T-cell (primary cell): ENCODE measurements at regions of chr14 and their contacts with region 1.

Region 1: GRCh38 chr14:64569184-64569631 is 19.4 kb downstream of the PPP1R36 start:
- DNase-seq: no peak
- ATAC-seq: no peak
- H3K4me3 ChIP-seq: no peak overlapping the region
- H3K4me3 Mint-ChIP-seq: no peak overlapping the region
- H3K27ac ChIP-seq: no peak overlapping the region
- H3K27ac Mint-ChIP-seq: no peak overlapping the region
- H3K4me1 ChIP-seq: no peaks in the 10 kb centered on the region
- H3K4me1 Mint-ChIP-seq: no peaks in the 10 kb centered on the region
- H3K27me3 ChIP-seq: peaks cover 0 to 5% of the 10 kb centered on the region in 2 experiments
- H3K27me3 Mint-ChIP-seq: peaks cover 0 to 5% of the 10 kb centered on the region in 2 donors

Region 2: GRCh38 chr14:63078578-63078977 is 1490.6 kb before region 1 on chr14:
- CTCF ChIA-PET with region 1: no interaction called
- POLR2A ChIA-PET with region 1: no interaction called
- DNase-seq: no peak
- ATAC-seq: no peak
- H3K4me3 ChIP-seq: no peak overlapping the region
- H3K4me3 Mint-ChIP-seq: no peak overlapping the region
- H3K27ac ChIP-seq: no peak overlapping the region
- H3K27ac Mint-ChIP-seq: no peak overlapping the region
- H3K4me1 ChIP-seq: no peaks in the 10 kb centered on the region
- H3K4me1 Mint-ChIP-seq: no peaks in the 10 kb centered on the region
- H3K27me3 ChIP-seq: peaks cover 0 to 2% of the 10 kb centered on the region in 2 experiments
- H3K27me3 Mint-ChIP-seq: no peaks in the 10 kb centered on the region

Region 3: DNA sequence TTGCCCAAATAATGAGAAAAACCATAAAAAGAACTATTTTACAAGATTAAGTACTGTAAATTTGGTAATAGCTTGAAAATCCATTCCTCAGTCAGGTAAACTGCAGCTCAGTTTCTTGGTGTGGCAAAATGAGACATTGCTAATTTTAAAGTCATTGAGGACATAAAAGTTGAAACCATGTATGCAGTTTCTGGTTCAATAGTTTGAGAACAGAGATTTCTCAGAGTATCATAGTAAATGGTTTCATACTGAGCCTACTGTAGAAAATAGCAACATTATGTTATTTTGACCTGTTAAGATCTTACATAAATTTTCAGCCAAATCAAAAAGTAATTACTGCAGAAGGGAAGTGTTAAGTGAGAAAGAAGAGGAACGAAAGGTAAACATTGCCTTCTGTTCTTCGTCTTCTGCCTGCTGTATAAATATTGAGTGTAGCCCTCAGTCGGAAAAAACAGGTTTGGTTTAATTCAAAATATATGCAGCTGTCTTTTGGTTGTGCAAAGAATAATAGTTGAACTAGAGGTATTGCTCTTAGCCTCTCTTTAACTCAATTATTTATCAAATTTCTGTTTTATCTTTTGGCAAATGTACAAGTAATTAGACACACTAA is 596.8 kb before region 1 on chr14:
- CTCF ChIA-PET with region 1: no interaction called
- POLR2A ChIA-PET with region 1: interaction called in 1 of 2 experiments, 11 read pairs
- DNase-seq: no peak
- ATAC-seq: no peak
- H3K4me3 ChIP-seq: no peak overlapping the region
- H3K4me3 Mint-ChIP-seq: no peak overlapping the region
- H3K27ac ChIP-seq: no peak overlapping the region
- H3K27ac Mint-ChIP-seq: no peak overlapping the region
- H3K4me1 ChIP-seq: no peaks in the 10 kb centered on the region
- H3K4me1 Mint-ChIP-seq: no peaks in the 10 kb centered on the region
- H3K27me3 ChIP-seq: no peaks in the 10 kb centered on the region
- H3K27me3 Mint-ChIP-seq: no peaks in the 10 kb centered on the region